Panc1 (cell line): ENCODE measurements at regions of chr20 and their contacts with region 1.

Region 1: GRCh38 chr20:62500237-62500864 is 24.6 kb upstream of the GATA5 start:
- DNase-seq: no peak
- ATAC-seq: peak; percentile 78
- H3K4me3 ChIP-seq: no peak overlapping the region
- H3K27ac ChIP-seq: peak overlapping the region; percentile 84
- H3K4me1 ChIP-seq: peaks cover 36% of the 10 kb centered on the region
- H3K27me3 ChIP-seq: no peaks in the 10 kb centered on the region
- CTCF ChIP-seq: peak; percentile 97

Region 2: GRCh38 chr20:62476056-62476838 is 24.1 kb before region 1 on chr20:
- CTCF ChIA-PET with region 1: interaction called, 19 read pairs
- POLR2A ChIA-PET with region 1: no interaction called
- in situ Hi-C with region 1: no loop called
- intact Hi-C with region 1: no loop called
- DNase-seq: no peak
- ATAC-seq: peak; percentile 67
- H3K4me3 ChIP-seq: peak overlapping the region; percentile 46 to 76
- H3K27ac ChIP-seq: peak overlapping the region; percentile 95
- H3K4me1 ChIP-seq: peaks cover 37% of the 10 kb centered on the region
- H3K27me3 ChIP-seq: no peaks in the 10 kb centered on the region
- CTCF ChIP-seq: no peak

Region 3: DNA sequence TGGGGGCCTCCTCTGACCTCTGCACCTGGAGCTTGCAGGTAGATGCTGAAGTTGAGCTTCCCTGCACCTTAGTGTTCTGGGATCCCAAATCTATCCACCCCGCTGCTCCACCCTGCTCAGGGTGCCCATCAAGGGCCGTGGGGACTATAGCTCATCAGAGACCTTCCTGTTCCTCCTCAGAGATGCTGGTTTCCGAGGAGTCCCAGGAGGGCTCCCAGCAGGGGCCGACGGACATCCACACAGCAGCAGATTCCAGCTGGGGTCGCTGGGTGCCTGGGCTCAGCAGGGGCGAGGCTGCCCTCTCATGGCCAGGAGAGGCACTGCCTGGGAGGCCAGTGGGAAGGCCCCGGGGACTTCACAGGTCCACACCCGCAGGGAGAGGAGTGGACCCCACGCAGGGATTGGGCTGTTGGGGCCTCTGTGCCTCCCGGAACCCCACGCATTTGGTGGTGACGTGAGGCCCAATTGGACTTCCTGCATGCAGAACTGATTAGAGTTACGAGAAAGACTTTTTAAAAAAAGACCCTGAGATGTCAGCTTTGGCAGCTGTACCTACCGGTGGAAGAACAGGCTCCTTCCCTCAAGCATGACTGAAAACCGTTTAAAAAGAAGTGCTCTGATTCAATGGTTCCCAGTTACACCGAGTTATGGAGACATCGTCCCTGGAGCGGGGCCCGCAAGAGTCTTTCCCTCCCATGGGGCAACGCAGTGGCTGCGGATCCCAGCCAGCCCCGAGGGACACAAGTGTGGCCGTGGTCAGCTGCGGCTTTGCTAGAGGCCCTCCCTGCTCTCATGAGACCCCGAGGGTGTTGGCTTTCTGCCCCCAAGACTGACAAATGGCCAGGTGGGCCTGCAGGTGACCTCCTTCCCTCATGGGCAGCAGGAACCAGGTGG is 116.6 kb after region 1 on chr20:
- CTCF ChIA-PET with region 1: interaction called, 14 read pairs
- POLR2A ChIA-PET with region 1: no interaction called
- in situ Hi-C with region 1: no loop called
- intact Hi-C with region 1: loop called (anchors 5 kb)
- DNase-seq: peak; percentile 52
- ATAC-seq: peak; percentile 84
- H3K4me3 ChIP-seq: peak overlapping the region in 1 of 2 experiments; percentile 20; a peak in 2 of 4 replicates
- H3K27ac ChIP-seq: peak overlapping the region; percentile 99
- H3K4me1 ChIP-seq: peaks cover 54% of the 10 kb centered on the region
- H3K27me3 ChIP-seq: no peaks in the 10 kb centered on the region
- CTCF ChIP-seq: peak; percentile 99